Ovary (tissue), 10 donors: ENCODE measurements at regions of chr3 and their contacts with region 1.

Region 1: GRCh38 chr3:114418724-114419543 is 125.1 kb downstream of the TIGIT start:
- DNase-seq: peak in 1 of 5 donors; percentile 12
- H3K4me3 ChIP-seq: peak overlapping the region; percentile 7
- H3K27ac ChIP-seq: peak overlapping the region; percentile 38 to 59
- H3K4me1 ChIP-seq: peaks cover 10% of the 10 kb centered on the region
- H3K27me3 ChIP-seq: no peaks in the 10 kb centered on the region
- CTCF ChIP-seq: peak; percentile 56 to 99 (median 98)
- EP300 ChIP-seq: no peak
- POLR2A ChIP-seq: peak; percentile 13

Region 2: DNA sequence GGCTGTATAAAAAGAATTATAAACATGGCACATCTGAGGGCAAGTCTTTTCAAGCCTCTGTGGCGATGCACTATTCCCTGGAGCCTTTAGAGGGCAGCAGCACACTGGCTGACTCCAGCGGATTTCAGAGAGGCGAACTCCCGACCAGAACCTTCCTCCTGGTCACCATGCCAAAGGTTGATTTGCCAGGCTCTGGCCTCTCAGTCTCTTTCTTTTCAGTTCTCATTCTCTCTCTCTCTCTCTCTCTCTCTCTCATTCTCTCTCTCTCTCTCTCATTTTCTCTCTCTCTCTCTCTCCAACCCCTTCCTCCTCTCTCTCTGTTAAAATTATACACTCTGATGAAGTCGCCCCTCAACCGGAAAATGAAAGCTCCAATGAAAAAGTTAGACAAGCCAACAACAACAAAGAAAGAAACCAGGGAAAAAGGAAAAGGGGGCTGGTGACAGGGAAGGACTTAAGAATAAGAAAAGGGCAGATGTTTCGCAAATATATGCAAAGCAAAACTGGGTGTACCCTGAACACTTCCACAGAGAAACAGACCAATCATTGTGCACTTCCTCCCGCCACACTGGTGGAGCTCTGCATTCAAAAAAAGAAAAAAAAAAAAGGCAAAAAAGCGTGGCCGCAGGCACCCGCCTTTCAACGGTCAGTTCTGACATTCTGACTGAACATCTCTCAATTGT is 34.9 kb before region 1 on chr3:
- intact Hi-C with region 1: loop called in 1 of 4 experiments (anchors 5 kb)
- DNase-seq: peak; percentile 82 to 87 (median 87)
- H3K4me3 ChIP-seq: peak overlapping the region; percentile 42
- H3K27ac ChIP-seq: peak overlapping the region; percentile 42 to 63
- H3K4me1 ChIP-seq: peaks cover 7% of the 10 kb centered on the region
- H3K27me3 ChIP-seq: no peaks in the 10 kb centered on the region
- CTCF ChIP-seq: peak; percentile 84 to 91 (median 90)
- EP300 ChIP-seq: no peak
- POLR2A ChIP-seq: no peak

Region 3: GRCh38 chr3:114454551-114455251 is 35.8 kb after region 1 on chr3:
- intact Hi-C with region 1: loop called in 1 of 4 experiments (anchors 5 kb)
- DNase-seq: peak; percentile 32 to 44 (median 37)
- H3K4me3 ChIP-seq: peak overlapping the region; percentile 49
- H3K27ac ChIP-seq: peak overlapping the region; percentile 30 to 71
- H3K4me1 ChIP-seq: peaks cover 3% of the 10 kb centered on the region
- H3K27me3 ChIP-seq: no peaks in the 10 kb centered on the region
- CTCF ChIP-seq: peak in 2 of 3 donors; percentile 62 to 97
- EP300 ChIP-seq: no peak
- POLR2A ChIP-seq: peak; percentile 11